Heart left ventricle (tissue), 16 donors: ENCODE measurements at regions of chr22 and their contacts with region 1.

Region 1: DNA sequence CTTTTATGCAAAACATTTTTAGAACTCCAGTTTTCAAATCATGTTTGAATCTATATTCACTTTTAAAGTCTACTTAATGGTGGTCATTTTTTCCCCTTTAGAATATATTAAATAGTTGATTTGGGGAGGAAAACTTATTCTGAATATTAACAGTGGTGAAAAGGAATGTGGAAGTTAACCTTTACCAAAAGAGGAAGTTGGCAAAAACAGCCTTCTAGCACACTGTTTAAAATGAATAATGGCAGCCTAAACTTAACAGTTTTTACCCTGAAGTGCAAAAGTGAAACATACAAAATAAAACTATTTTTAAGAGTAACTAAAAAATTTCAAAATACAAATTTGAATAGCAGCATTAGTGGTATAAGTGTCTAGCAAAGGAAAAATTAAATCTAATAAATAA is 86.4 kb downstream of the GRK3 start:
- DNase-seq: no peak
- ATAC-seq: no peak
- H3K4me3 ChIP-seq: no peak overlapping the region
- H3K27ac ChIP-seq: peak overlapping the region in 1 of 12 donors; percentile 47
- H3K4me1 ChIP-seq: peaks cover 0 to 13% (median 0%) of the 10 kb centered on the region in 12 donors
- H3K27me3 ChIP-seq: no peaks in the 10 kb centered on the region
- CTCF ChIP-seq: no peak
- POLR2A ChIP-seq: no peak

Region 2: GRCh38 chr22:25582946-25583345 is 67.9 kb before region 1 on chr22:
- intact Hi-C with region 1: no loop called
- DNase-seq: no peak
- ATAC-seq: no peak
- H3K4me3 ChIP-seq: no peak overlapping the region
- H3K27ac ChIP-seq: no peak overlapping the region
- H3K4me1 ChIP-seq: peaks cover 0 to 10% (median 0%) of the 10 kb centered on the region in 12 donors
- H3K27me3 ChIP-seq: no peaks in the 10 kb centered on the region
- CTCF ChIP-seq: no peak
- POLR2A ChIP-seq: no peak

Region 3: GRCh38 chr22:25598609-25599008 is 52.2 kb before region 1 on chr22:
- intact Hi-C with region 1: loop called in 1 of 10 experiments (anchors 5 kb)
- DNase-seq: no peak
- ATAC-seq: no peak
- H3K4me3 ChIP-seq: no peak overlapping the region
- H3K27ac ChIP-seq: no peak overlapping the region
- H3K4me1 ChIP-seq: peaks cover 0 to 6% (median 0%) of the 10 kb centered on the region in 12 donors
- H3K27me3 ChIP-seq: no peaks in the 10 kb centered on the region
- CTCF ChIP-seq: no peak
- POLR2A ChIP-seq: no peak

Region 4: GRCh38 chr22:25976356-25976755 is 325.5 kb after region 1 on chr22:
- intact Hi-C with region 1: no loop called
- DNase-seq: no peak
- ATAC-seq: no peak
- H3K4me3 ChIP-seq: no peak overlapping the region
- H3K27ac ChIP-seq: no peak overlapping the region
- H3K4me1 ChIP-seq: peaks cover 0 to 16% (median 3%) of the 10 kb centered on the region in 12 donors
- H3K27me3 ChIP-seq: no peaks in the 10 kb centered on the region
- CTCF ChIP-seq: no peak
- POLR2A ChIP-seq: no peak